ENCODE measurements at regions of chr3 and their contacts with region 1.

Region 1: GRCh38 chr3:138213398-138214085 is 26.4 kb downstream of the ARMC8 start:
- DNase-seq: no peak
- ATAC-seq: peak; percentile 45
- H3K4me3 ChIP-seq: no peak overlapping the region
- H3K4me3 Mint-ChIP-seq: no peak overlapping the region
- H3K27ac ChIP-seq: no peak overlapping the region
- H3K27ac Mint-ChIP-seq: peak overlapping the region in 1 of 9 donors; percentile 19
- H3K4me1 ChIP-seq: no peaks in the 10 kb centered on the region
- H3K4me1 Mint-ChIP-seq: peaks cover 7 to 59% (median 28%) of the 10 kb centered on the region in 7 donors
- H3K27me3 ChIP-seq: no peaks in the 10 kb centered on the region
- H3K27me3 Mint-ChIP-seq: no peaks in the 10 kb centered on the region

Region 2: GRCh38 chr3:138009476-138010272 is 203.9 kb before region 1 on chr3 and contains the start of gene CLDN18:
- CTCF ChIA-PET with region 1: no interaction called
- POLR2A ChIA-PET with region 1: no interaction called
- intact Hi-C with region 1: no loop called
- DNase-seq: no peak
- ATAC-seq: no peak
- H3K4me3 ChIP-seq: no peak within 1 kb of the TSS
- H3K4me3 Mint-ChIP-seq: no peak within 1 kb of the TSS
- H3K27ac ChIP-seq: no peak within 1 kb of the TSS
- H3K27ac Mint-ChIP-seq: no peak within 1 kb of the TSS
- H3K4me1 ChIP-seq: no peaks in the 10 kb centered on the region
- H3K4me1 Mint-ChIP-seq: no peaks in the 10 kb centered on the region
- H3K27me3 ChIP-seq: no peaks in the 10 kb centered on the region
- H3K27me3 Mint-ChIP-seq: peaks cover 0 to 13% (median 7%) of the 10 kb centered on the region in 5 donors
- total RNA-seq, gene CLDN18: not detected

Region 3: GRCh38 chr3:138195481-138195880 is 18.1 kb before region 1 on chr3:
- CTCF ChIA-PET with region 1: interaction called, 4 read pairs
- POLR2A ChIA-PET with region 1: interaction called, 3 read pairs
- intact Hi-C with region 1: loop called in 1 of 2 experiments (anchors 2 kb)
- DNase-seq: no peak
- ATAC-seq: no peak
- H3K4me3 ChIP-seq: no peak overlapping the region
- H3K4me3 Mint-ChIP-seq: no peak overlapping the region
- H3K27ac ChIP-seq: no peak overlapping the region
- H3K27ac Mint-ChIP-seq: no peak overlapping the region
- H3K4me1 ChIP-seq: no peaks in the 10 kb centered on the region
- H3K4me1 Mint-ChIP-seq: peaks cover 22 to 67% (median 57%) of the 10 kb centered on the region in 7 donors
- H3K27me3 ChIP-seq: no peaks in the 10 kb centered on the region
- H3K27me3 Mint-ChIP-seq: no peaks in the 10 kb centered on the region

Region 4: DNA sequence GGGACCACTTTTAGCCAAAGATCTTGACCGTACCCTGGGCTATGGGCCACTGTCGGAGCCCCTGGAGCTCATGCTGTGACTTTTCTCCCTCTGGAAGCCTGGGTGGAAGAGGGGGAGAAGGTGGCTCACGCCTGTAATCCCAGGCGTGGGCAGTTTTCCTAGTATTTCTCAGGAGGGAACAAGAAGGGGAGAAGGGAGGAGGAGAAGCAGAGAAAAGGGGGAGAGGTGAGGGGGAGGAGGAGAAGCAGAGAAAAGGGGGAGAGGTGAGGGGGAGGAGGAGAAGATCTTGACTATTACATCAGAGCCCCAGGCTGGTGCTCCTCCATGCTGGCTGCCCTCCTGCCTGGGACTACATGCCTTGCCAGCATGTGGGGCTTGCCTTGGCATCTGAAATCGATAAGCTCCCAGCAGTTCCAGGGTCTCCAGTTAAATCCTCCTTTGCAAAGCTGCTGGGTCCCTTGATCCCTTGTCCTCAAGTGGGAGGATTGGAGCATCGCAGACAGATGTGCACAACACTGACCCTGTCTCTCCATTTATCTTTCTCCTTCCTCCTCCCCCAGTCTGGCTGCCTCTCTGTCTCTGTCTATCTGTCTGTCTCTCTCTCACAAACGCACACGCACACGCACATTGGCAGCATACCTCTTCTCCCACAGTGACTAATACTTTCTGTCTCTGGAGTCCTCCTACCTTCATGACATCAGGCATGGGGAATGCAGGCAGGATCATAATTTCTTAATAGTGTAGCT is 176.5 kb after region 1 on chr3:
- CTCF ChIA-PET with region 1: no interaction called
- POLR2A ChIA-PET with region 1: no interaction called
- intact Hi-C with region 1: no loop called
- DNase-seq: no peak
- ATAC-seq: no peak
- H3K4me3 ChIP-seq: no peak overlapping the region
- H3K4me3 Mint-ChIP-seq: no peak overlapping the region
- H3K27ac ChIP-seq: no peak overlapping the region
- H3K27ac Mint-ChIP-seq: no peak overlapping the region
- H3K4me1 ChIP-seq: no peaks in the 10 kb centered on the region
- H3K4me1 Mint-ChIP-seq: no peaks in the 10 kb centered on the region
- H3K27me3 ChIP-seq: no peaks in the 10 kb centered on the region
- H3K27me3 Mint-ChIP-seq: peaks cover 0 to 17% (median 4%) of the 10 kb centered on the region in 5 donors

Measured in naive thymus-derived CD4-positive, alpha-beta T cell (primary cell).